ENCODE measurements at regions of chr1 and their contacts with region 1.

Region 1: DNA sequence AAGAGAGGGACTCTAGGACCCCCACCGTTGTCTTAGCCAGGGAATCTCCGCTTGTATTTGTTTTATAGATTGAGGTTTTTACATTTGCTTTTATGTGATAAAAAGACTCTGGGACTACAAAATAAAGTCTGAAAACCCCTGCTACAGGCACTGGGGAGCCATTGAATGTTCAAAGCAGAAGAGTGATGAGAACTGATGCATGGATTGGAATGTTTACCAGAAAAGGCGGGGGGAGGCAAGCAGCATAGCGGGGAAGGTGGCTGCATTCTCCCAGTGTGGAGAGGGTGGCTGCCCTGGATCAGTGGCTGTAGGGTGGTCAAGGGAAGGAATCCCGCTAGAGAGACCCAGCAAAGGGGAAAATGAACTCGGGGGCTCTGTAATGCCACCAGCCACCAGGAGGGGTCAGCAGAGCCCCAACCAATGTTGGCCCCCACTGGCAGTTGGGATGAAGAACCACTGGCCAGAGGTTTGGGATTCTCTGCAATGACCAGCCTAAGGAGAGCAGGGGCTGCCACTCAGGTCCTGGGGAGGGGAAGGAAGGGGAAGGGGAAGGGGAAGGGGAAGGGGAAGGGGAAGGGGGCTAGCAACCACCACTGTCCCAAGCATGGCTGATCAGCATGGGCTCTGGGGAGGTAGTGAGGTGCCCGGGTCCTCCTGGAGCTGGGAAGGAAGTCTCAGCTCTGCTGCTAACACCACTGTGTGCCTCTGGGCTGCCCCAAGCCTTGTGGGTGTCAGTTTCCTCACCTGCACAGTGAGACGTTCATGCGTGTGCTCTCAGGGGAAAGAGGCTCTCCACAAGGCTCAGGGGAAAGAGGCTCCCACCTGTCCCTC is 19.2 kb upstream of the PEF1 start:
- DNase-seq: peak in 1 of 2 experiments; percentile 80
- H3K4me3 ChIP-seq: no peak overlapping the region
- H3K4me1 ChIP-seq: no peaks in the 10 kb centered on the region
- H3K27me3 ChIP-seq: peaks cover 4% of the 10 kb centered on the region

Region 2: GRCh38 chr1:31959521-31960340 is 295.9 kb after region 1 on chr1:
- in situ Hi-C with region 1: loop called (anchors 10 kb)
- DNase-seq: no peak
- H3K4me3 ChIP-seq: no peak overlapping the region
- H3K4me1 ChIP-seq: no peaks in the 10 kb centered on the region; the same call in 1 of the 2 replicates
- H3K27me3 ChIP-seq: no peaks in the 10 kb centered on the region

Region 3: GRCh38 chr1:32063261-32063681 is 399.4 kb after region 1 on chr1:
- in situ Hi-C with region 1: loop called (anchors 10 kb)
- DNase-seq: peak; percentile 38 to 73
- H3K4me3 ChIP-seq: no peak overlapping the region
- H3K4me1 ChIP-seq: peaks cover 20% of the 10 kb centered on the region
- H3K27me3 ChIP-seq: no peaks in the 10 kb centered on the region